ENCODE measurements at regions of chr11 and their contacts with region 1.

Region 1: GRCh38 chr11:61947486-61948210 is 2.5 kb upstream of the BEST1 start:
- DNase-seq: peak; percentile 82
- ATAC-seq: peak; percentile 90
- H3K4me3 ChIP-seq: no peak overlapping the region
- H3K4me3 Mint-ChIP-seq: no peak overlapping the region
- H3K27ac ChIP-seq: no peak overlapping the region
- H3K27ac Mint-ChIP-seq: peak overlapping the region; percentile 3
- H3K4me1 ChIP-seq: peaks cover 7 to 9% of the 10 kb centered on the region in 2 donors
- H3K4me1 Mint-ChIP-seq: peaks cover 8% of the 10 kb centered on the region
- H3K27me3 ChIP-seq: no peaks in the 10 kb centered on the region
- H3K27me3 Mint-ChIP-seq: peaks cover 4% of the 10 kb centered on the region
- CTCF ChIP-seq: peak; percentile 90

Region 2: DNA sequence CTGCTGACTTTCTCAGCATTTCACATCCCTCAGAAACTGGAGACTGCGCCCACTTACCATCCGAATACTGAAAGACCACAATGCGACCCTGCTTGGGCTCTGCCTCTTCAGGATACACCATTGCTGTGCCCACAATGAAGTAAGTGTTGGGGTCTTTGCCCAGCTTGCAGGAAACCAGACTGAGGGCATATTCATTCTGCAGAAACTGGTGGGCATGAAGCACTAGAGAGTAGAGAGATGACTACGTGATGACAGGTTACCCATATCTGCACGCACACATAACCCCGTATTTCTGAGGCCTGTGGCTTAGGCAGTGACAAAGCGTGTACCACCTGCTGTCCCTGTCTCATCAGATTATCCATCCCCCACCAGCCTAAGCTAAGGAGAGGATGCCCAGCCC is 637.9 kb before region 1 on chr11:
- CTCF ChIA-PET with region 1: no interaction called
- POLR2A ChIA-PET with region 1: no interaction called
- intact Hi-C with region 1: no loop called
- DNase-seq: no peak
- ATAC-seq: no peak
- H3K4me3 ChIP-seq: no peak overlapping the region
- H3K4me3 Mint-ChIP-seq: no peak overlapping the region
- H3K27ac ChIP-seq: no peak overlapping the region
- H3K27ac Mint-ChIP-seq: no peak overlapping the region
- H3K4me1 ChIP-seq: no peaks in the 10 kb centered on the region
- H3K4me1 Mint-ChIP-seq: no peaks in the 10 kb centered on the region
- H3K27me3 ChIP-seq: no peaks in the 10 kb centered on the region
- H3K27me3 Mint-ChIP-seq: no peaks in the 10 kb centered on the region
- CTCF ChIP-seq: no peak

Region 3: DNA sequence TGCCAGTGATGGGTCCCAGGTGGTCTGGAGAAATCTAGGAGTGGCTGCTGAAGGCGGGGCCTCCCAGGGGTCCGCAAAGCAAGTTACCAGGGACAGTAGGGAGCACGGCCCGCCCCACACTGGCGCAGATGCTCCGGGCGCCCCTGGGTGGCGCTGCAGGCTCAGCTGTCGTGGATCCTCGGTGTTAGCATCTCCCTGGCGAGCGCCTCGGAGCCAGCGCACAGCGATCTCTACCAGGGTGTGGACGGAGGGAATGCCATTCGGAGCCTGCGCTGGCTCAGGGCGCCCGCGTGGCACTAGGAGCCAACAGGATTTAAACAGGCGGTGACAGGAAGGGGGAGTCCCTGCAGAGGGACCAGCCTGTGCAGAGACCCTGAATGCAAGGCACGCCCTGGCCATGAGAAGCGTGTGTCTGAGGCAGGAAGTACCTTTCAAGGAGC is 76.5 kb before region 1 on chr11:
- CTCF ChIA-PET with region 1: interaction called, 217 read pairs
- POLR2A ChIA-PET with region 1: interaction called, 3 read pairs
- intact Hi-C with region 1: loop called (anchors 1 kb)
- DNase-seq: peak; percentile 88
- ATAC-seq: peak; percentile 97
- H3K4me3 ChIP-seq: peak overlapping the region in 4 of 5 experiments; percentile 13 to 38 (median 26)
- H3K4me3 Mint-ChIP-seq: peak overlapping the region; percentile 84
- H3K27ac ChIP-seq: no peak overlapping the region
- H3K27ac Mint-ChIP-seq: peak overlapping the region; percentile 83
- H3K4me1 ChIP-seq: peaks cover 9 to 12% of the 10 kb centered on the region in 2 donors
- H3K4me1 Mint-ChIP-seq: peaks cover 8% of the 10 kb centered on the region
- H3K27me3 ChIP-seq: peaks cover 0 to 4% (median 0%) of the 10 kb centered on the region in 4 experiments
- H3K27me3 Mint-ChIP-seq: no peaks in the 10 kb centered on the region
- CTCF ChIP-seq: peak; percentile 98

Region 4: GRCh38 chr11:61961570-61962212 is 14.0 kb after region 1 on chr11:
- CTCF ChIA-PET with region 1: interaction called, 62 read pairs
- POLR2A ChIA-PET with region 1: interaction called, 11 read pairs
- intact Hi-C with region 1: no loop called
- DNase-seq: no peak
- ATAC-seq: no peak
- H3K4me3 ChIP-seq: no peak overlapping the region
- H3K4me3 Mint-ChIP-seq: peak overlapping the region; percentile 40
- H3K27ac ChIP-seq: peak overlapping the region in 1 of 2 donors; percentile 89
- H3K27ac Mint-ChIP-seq: peak overlapping the region; percentile 84
- H3K4me1 ChIP-seq: peaks cover 41 to 53% of the 10 kb centered on the region in 2 donors
- H3K4me1 Mint-ChIP-seq: peaks cover 57% of the 10 kb centered on the region
- H3K27me3 ChIP-seq: no peaks in the 10 kb centered on the region
- H3K27me3 Mint-ChIP-seq: no peaks in the 10 kb centered on the region
- CTCF ChIP-seq: no peak

Region 5: DNA sequence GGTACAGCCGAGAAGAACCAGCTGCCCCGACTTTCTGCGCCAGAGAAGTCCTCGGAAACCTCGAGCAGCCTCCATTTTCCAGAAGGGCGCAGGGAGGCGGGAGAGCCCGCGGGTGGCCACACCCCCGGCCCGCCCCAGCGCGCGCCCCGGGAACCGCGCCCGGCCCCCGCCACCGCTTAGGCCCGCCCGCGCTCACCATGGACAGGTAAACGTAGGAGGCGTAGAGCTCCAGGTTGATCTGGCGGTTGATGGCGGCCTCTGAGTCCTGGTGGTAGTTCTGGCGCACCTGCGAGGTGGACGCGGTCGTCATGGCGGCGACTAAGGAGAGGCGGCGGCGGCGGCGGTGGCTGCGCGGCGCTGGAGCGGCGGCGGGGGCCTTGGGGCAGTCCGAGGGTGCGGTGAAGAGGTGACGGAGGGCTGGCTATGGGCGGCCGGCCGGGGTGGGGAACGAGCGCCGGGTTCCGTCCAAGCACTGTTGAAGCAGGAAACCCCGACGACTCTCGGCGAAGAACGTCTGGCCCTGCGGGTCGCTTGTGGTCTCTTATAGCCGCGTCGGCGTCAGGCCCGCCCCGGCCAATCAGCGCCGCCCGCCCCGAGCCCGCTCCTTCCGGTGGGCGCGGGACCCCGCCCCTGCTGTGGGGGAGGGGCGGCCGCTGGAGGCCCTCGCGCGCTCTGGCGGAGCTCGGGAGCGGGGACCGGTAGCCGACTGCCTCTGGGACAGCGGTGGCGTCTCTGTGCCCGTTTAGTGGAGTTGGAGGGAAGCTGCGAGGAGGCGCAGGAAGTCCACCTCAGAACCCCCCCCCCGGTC is 19.7 kb after region 1 on chr11 and contains the start of gene FTH1:
- CTCF ChIA-PET with region 1: interaction called, 62 read pairs
- POLR2A ChIA-PET with region 1: interaction called, 11 read pairs
- intact Hi-C with region 1: no loop called
- DNase-seq: peak; percentile 95
- ATAC-seq: peak; percentile 67
- H3K4me3 ChIP-seq: peak within 1 kb of the TSS; percentile 88 to 99 (median 96)
- H3K4me3 Mint-ChIP-seq: peak within 1 kb of the TSS; percentile 97
- H3K27ac ChIP-seq: peak within 1 kb of the TSS; percentile 86 to 94
- H3K27ac Mint-ChIP-seq: peak within 1 kb of the TSS; percentile 99
- H3K4me1 ChIP-seq: peaks cover 58 to 67% of the 10 kb centered on the region in 2 donors
- H3K4me1 Mint-ChIP-seq: peaks cover 72% of the 10 kb centered on the region
- H3K27me3 ChIP-seq: no peaks in the 10 kb centered on the region
- H3K27me3 Mint-ChIP-seq: no peaks in the 10 kb centered on the region
- CTCF ChIP-seq: no peak
- total RNA-seq, gene FTH1: 1,265 and 1,314 TPM in 2 replicates

Region 6: DNA sequence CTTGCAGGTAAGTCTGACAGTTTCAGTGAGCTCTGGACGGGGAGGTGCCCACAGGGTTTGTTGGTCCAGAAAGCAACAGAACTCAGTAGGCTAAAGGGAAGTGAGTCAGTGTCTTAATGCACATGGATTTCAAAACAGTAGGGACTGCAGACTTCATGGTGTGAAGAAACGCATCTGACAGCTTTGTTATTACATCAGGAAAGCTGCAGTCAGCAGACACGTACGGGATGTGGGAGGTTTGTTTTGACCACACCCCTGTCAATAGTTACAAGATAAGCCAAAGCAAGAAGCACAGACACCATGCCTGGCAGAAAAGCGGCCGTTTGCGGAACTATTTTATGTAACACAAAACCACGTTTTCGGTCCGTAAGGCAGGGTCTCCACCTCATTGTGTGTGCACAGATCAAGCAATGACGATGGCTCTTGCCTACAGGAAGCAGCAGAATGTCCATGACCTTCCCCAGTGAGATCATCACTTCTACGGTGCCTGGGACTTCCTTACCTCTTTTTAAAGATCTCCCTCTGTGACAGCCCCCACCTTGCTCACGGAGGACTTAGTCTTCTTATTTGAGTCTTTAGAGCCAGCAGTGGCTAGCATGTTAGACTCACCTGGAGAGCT is 77.9 kb after region 1 on chr11:
- CTCF ChIA-PET with region 1: interaction called, 11 read pairs
- POLR2A ChIA-PET with region 1: no interaction called
- intact Hi-C with region 1: no loop called
- DNase-seq: peak; percentile 93
- ATAC-seq: peak; percentile 83
- H3K4me3 ChIP-seq: peak overlapping the region in 3 of 5 experiments; percentile 6 to 30 (median 12)
- H3K4me3 Mint-ChIP-seq: peak overlapping the region; percentile 56
- H3K27ac ChIP-seq: peak overlapping the region; percentile 75 to 79
- H3K27ac Mint-ChIP-seq: peak overlapping the region; percentile 87
- H3K4me1 ChIP-seq: peaks cover 15 to 19% of the 10 kb centered on the region in 2 donors
- H3K4me1 Mint-ChIP-seq: peaks cover 23% of the 10 kb centered on the region
- H3K27me3 ChIP-seq: peaks cover 0 to 4% (median 0%) of the 10 kb centered on the region in 4 experiments
- H3K27me3 Mint-ChIP-seq: peaks cover 3% of the 10 kb centered on the region
- CTCF ChIP-seq: no peak

Region 7: DNA sequence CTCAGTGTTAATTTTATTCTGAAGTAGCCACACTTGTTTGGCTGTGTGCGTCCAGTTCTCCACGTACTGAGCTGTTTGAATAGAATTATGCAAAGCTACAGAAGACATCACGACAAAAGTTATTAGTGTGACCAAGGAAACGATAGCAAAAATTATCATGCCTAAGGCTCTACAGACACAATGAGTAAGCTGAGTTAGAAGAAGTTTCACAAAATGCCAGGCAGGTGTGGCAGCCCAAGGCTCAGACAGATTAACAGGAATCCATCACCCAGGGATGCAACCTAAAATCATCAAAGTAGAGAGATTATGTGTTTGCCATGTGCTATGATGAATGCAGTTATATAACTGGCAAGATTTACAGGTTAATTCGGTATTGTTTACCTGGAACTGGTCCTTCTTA is 103.1 kb after region 1 on chr11:
- CTCF ChIA-PET with region 1: interaction called, 11 read pairs
- POLR2A ChIA-PET with region 1: no interaction called
- intact Hi-C with region 1: no loop called
- DNase-seq: no peak
- ATAC-seq: no peak
- H3K4me3 ChIP-seq: no peak overlapping the region
- H3K4me3 Mint-ChIP-seq: no peak overlapping the region
- H3K27ac ChIP-seq: no peak overlapping the region
- H3K27ac Mint-ChIP-seq: no peak overlapping the region
- H3K4me1 ChIP-seq: no peaks in the 10 kb centered on the region
- H3K4me1 Mint-ChIP-seq: no peaks in the 10 kb centered on the region
- H3K27me3 ChIP-seq: peaks cover 0 to 4% (median 2%) of the 10 kb centered on the region in 4 experiments
- H3K27me3 Mint-ChIP-seq: peaks cover 44% of the 10 kb centered on the region
- CTCF ChIP-seq: no peak

Region 8: DNA sequence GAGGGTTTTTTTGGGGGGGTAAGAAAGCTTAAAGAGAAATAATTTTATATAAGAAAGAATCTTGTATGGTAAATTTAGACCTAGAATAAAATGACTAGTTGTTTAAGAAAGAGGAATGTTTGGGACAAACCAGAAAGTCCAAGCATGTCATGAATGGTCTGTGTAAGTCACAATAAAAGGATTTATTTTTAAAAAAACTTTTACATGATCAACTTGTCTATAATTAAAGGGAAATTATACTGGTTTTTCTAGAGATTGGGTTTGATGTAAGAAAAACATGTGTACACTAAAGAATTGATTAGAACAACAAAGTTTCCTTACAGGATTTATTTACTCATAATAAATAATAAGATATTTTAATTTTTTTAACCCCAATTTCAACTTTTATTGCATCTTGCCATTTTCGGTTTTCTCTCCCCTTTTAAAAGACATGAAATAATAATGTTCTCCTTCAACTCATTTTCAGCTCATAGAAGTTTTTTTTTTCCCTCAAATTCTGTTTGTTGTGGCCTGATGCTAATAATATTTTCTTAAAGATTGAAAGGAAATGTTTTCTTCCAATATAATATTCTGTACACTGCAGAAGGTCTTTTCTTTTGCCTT is 140.8 kb after region 1 on chr11:
- CTCF ChIA-PET with region 1: interaction called, 203 read pairs
- POLR2A ChIA-PET with region 1: no interaction called
- intact Hi-C with region 1: no loop called
- DNase-seq: no peak
- ATAC-seq: no peak
- H3K4me3 ChIP-seq: no peak overlapping the region
- H3K4me3 Mint-ChIP-seq: no peak overlapping the region
- H3K27ac ChIP-seq: no peak overlapping the region
- H3K27ac Mint-ChIP-seq: no peak overlapping the region
- H3K4me1 ChIP-seq: no peaks in the 10 kb centered on the region
- H3K4me1 Mint-ChIP-seq: no peaks in the 10 kb centered on the region
- H3K27me3 ChIP-seq: peaks cover 0 to 5% (median 1%) of the 10 kb centered on the region in 4 experiments
- H3K27me3 Mint-ChIP-seq: peaks cover 5% of the 10 kb centered on the region
- CTCF ChIP-seq: no peak

Region 9: DNA sequence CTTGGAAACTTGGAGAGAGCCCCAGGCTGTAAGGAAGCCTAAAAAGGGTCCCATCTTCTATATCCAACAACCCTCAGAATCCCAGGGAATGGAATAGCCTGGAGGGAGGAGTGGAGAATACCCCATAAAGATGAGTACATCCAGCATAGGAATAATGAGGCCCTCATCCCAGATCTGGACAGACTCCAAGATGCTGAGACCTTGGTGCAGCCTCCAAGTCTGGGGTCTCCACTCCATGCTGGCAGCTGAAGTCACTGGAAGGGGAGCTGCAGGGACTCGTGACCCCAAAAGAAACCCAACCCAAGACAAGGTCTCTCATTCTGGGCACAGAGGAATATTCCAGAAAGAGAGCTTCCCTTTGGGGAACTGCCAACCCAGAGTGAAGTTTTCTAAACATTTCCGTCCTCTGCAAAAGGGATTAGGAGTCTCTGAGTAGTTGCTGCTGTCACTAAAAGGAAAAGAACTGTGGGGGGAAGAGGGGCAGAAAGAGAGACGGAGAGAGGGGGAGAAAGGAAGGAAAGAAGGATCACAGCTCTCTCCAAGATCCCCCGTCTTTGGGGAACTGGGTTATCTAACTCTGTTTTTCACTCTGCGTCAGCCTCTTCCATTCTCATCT is 471.8 kb after region 1 on chr11:
- CTCF ChIA-PET with region 1: no interaction called
- POLR2A ChIA-PET with region 1: no interaction called
- intact Hi-C with region 1: no loop called
- DNase-seq: no peak
- ATAC-seq: no peak
- H3K4me3 ChIP-seq: no peak overlapping the region
- H3K4me3 Mint-ChIP-seq: no peak overlapping the region
- H3K27ac ChIP-seq: no peak overlapping the region
- H3K27ac Mint-ChIP-seq: no peak overlapping the region
- H3K4me1 ChIP-seq: peaks cover 1 to 2% of the 10 kb centered on the region in 2 donors
- H3K4me1 Mint-ChIP-seq: no peaks in the 10 kb centered on the region
- H3K27me3 ChIP-seq: peaks cover 0 to 2% (median 0%) of the 10 kb centered on the region in 4 experiments
- H3K27me3 Mint-ChIP-seq: peaks cover 11% of the 10 kb centered on the region
- CTCF ChIP-seq: no peak

Measured in B cell (primary cell).